ENCODE measurements at regions of chr1 and their contacts with region 1.

Region 1: DNA sequence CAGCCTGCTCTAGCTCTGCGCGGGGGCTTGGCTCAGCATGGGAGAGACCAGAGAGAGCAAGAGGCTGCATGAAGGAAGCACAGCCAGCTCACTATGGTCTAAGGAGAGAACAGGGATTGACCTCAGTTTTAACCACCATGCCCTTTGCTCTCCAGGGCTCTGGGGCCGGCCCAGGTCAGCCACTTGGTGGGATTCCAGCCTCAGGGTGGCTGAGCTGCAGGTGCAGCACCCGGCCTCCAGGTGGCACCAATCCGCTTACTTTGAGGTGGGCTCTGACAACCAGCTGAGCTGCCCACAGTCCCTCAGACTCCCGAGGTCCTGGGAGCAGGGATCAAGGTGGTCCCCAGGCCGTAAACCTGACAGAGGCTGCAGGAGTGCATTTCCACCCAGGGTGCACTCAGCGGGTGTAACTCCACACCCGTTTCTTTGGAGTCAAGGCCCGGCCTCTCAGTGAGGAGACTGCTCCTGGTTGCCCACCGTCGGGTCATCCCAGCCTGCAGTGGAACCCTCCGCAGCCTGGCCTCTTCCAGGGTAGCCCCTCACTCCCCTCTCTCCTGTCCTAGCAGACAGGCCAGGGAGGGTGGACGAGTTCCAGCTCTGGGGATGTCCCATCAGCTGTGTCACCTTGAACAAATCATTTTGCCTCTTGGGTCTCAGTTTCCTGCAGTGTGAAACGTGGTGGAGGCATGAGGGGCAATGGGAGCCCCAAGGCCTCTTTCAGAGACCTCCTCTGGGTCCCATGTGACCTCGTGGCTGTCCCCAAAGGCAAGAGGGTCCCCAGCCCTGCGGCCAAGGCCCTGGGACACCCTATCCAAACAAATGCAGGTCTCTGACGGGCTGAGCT is 607 bp upstream of the LGR6 start:
- DNase-seq: peak; percentile 45 to 57 (median 52)
- H3K4me3 ChIP-seq: peak overlapping the region in 3 of 7 experiments; percentile 24 to 54 (median 43)
- H3K27ac ChIP-seq: no peak overlapping the region
- H3K4me1 ChIP-seq: peaks cover 0 to 13% (median 9%) of the 10 kb centered on the region in 4 experiments
- H3K27me3 ChIP-seq: peaks cover 0 to 33% (median 14%) of the 10 kb centered on the region in 5 experiments

Region 2: GRCh38 chr1:202210385-202210784 is 17.4 kb after region 1 on chr1:
- CTCF ChIA-PET with region 1: interaction called, 18 read pairs
- POLR2A ChIA-PET with region 1: no interaction called
- DNase-seq: peak in 2 of 3 donors; percentile 59 to 71
- H3K4me3 ChIP-seq: no peak overlapping the region
- H3K27ac ChIP-seq: no peak overlapping the region
- H3K4me1 ChIP-seq: peaks cover 3 to 12% (median 6%) of the 10 kb centered on the region in 4 experiments
- H3K27me3 ChIP-seq: peaks cover 4 to 29% (median 19%) of the 10 kb centered on the region in 5 experiments